ENCODE measurements at regions of chr6 and their contacts with region 1.

Region 1: DNA sequence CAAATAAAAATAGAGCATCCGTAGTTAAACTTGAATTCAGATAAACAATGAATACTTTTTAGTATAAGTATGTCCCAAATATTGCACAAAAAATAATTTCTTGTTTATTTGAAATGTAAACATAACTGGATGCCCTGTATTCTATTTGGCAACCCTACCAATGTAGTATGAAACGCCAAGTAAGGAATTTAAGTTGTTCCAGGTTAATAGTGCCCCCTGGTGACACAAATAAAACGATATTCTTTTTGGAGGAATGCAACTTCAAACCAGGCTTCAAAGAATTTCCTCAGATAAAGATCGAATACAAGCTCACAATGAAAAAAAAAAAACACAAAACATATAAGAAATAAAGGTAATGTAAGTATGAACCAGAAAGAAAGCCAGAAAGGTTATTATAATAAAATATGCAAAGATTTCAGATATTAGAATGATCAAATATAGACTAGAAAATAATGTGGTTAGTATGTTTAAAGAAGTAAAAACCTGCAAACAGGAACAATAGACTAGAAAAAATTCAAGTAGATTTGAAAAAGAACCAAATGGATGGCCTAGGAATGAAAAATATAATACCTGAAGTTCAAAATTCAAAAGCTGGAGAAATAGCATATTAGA is 18.4 kb upstream of the AKAP7 start:
- DNase-seq: no peak
- ATAC-seq: no peak

Region 2: DNA sequence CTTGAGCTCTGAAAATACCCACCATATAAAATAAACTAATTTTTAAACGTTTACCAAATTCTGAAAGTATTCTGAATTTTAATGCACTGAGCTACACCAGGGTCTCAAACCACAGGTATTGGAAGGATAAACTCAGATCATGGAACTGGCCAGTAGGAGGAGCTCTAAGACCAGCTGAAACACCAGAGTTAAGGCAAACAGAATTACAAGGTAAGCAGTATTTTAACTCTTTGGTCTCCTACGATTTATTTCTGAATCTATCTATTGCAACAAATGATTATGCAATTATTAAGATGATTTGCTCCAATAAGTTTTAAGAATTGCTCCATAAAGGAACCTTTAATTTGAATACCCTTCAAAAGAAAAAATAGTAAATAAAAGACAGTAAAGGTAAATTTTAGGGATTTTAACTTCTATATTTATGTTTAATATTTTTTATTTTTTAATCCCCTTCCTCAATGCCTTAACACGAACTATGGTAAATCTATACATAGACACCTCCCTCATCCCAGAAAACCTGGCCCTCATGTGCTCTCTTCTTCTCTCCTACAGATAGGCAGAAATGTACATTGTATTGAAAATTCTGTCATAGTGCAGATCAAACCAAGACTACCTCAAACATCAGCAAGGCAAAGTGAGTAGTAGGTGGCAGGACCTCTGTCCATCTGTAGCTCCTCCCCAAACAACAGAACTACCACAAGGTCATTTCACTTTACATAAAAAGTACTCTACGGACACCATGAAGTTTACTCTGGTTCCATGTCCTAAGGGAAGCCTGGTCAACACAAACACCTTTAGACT is 231.3 kb before region 1 on chr6:
- intact Hi-C with region 1: loop called (anchors 5 kb)
- DNase-seq: no peak
- ATAC-seq: peak; percentile 94

Region 3: GRCh38 chr6:131084982-131085381 is 31.9 kb before region 1 on chr6:
- intact Hi-C with region 1: no loop called
- DNase-seq: no peak
- ATAC-seq: no peak

Measured in Right ventricle myocardium superior (tissue), 1 donor.